ENCODE measurements at regions of chr6 and their contacts with region 1.

Region 1: GRCh38 chr6:146526192-146526591 is 17.4 kb upstream of the RAB32 start:
- DNase-seq: no peak
- ATAC-seq: no peak
- H3K4me3 ChIP-seq: no peak overlapping the region
- H3K27ac ChIP-seq: no peak overlapping the region
- H3K4me1 ChIP-seq: no peaks in the 10 kb centered on the region
- H3K27me3 ChIP-seq: no peaks in the 10 kb centered on the region
- CTCF ChIP-seq: peak in 8 of 12 donors; percentile 19 to 38 (median 32)
- POLR2A ChIP-seq: no peak

Region 2: DNA sequence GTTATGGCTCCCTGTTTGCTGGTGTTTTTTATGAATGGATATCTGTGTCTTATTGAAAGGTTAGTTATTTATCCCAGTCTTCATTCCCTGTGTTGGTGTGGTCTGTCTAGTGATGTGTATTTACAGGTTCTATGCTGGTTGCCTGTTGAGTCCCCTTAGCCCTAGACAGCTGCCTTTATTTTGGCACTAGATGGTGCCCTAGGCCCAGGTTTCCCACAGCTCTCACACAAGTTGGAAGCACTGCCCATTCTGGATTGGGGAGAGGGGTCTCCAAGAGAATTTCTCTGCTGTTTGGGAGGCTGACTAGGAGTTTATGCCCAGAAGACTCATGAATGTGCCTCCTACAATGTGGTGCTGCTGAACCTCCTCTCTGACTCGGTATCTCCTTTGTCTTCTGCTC is 484.9 kb before region 1 on chr6:
- intact Hi-C with region 1: loop called in 1 of 10 experiments (anchors 5 kb)
- DNase-seq: no peak
- ATAC-seq: peak in 1 of 4 donors; percentile 61
- H3K4me3 ChIP-seq: no peak overlapping the region
- H3K27ac ChIP-seq: no peak overlapping the region
- H3K4me1 ChIP-seq: no peaks in the 10 kb centered on the region
- H3K27me3 ChIP-seq: peaks cover 0 to 5% (median 0%) of the 10 kb centered on the region in 9 donors
- CTCF ChIP-seq: peak in 8 of 12 donors; percentile 12 to 44 (median 26)
- POLR2A ChIP-seq: no peak

Measured in heart left ventricle (tissue), 16 donors.